HEK293T (cell line): ENCODE measurements at regions of chr15 and their contacts with region 1.

Region 1: GRCh38 chr15:91706322-91707032 is 147.0 kb upstream of the SLCO3A1 start:
- DNase-seq: peak; percentile 67

Region 2: DNA sequence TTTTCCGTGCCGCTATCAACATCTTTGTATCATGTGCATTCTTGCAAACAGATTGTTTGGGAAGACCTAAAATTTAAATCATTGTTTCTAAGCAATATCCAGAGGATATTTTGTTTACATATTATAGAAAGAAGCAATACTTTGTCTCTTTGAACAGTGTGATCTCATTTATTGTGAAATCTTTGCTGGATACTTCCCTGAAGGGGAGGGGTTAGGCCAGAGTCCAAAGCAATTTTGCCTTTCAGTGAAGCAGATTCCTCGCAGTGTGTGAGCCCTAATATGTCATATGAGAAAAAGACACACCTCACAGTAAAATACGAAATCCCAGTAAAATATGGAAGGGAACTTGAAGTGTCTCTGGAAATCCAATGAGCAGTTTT is 11.7 kb before region 1 on chr15:
- CTCF ChIA-PET with region 1: interaction called, 19 read pairs
- POLR2A ChIA-PET with region 1: no interaction called
- DNase-seq: no peak

Region 3: GRCh38 chr15:92077353-92078085 is 371.0 kb after region 1 on chr15:
- CTCF ChIA-PET with region 1: interaction called, 15 read pairs
- POLR2A ChIA-PET with region 1: no interaction called
- DNase-seq: peak; percentile 65